Endothelial cell of umbilical vein (primary cell): ENCODE measurements at regions of chr11 and their contacts with region 1.

Region 1: GRCh38 chr11:10808553-10809372 is at the start of gene EIF4G2:
- DNase-seq: peak; percentile 99
- H3K4me3 ChIP-seq: peak within 1 kb of the TSS; percentile 88 to 97 (median 97)
- H3K27ac ChIP-seq: peak within 1 kb of the TSS; percentile 97
- H3K4me1 ChIP-seq: peaks cover 39% of the 10 kb centered on the region
- H3K27me3 ChIP-seq: no peaks in the 10 kb centered on the region
- CTCF ChIP-seq: no peak
- POLR2A ChIP-seq: peak; percentile 100
- total RNA-seq, gene EIF4G2: 1,175 and 1,194 TPM in 2 replicates

Region 2: GRCh38 chr11:10784232-10785145 is 24.3 kb before region 1 on chr11:
- CTCF ChIA-PET with region 1: interaction called, 4 read pairs
- POLR2A ChIA-PET with region 1: interaction called, 15 read pairs
- dilution Hi-C with region 1: no loop called
- intact Hi-C with region 1: no loop called
- DNase-seq: peak; percentile 81
- H3K4me3 ChIP-seq: no peak overlapping the region
- H3K27ac ChIP-seq: peak overlapping the region; percentile 63
- H3K4me1 ChIP-seq: peaks cover 19% of the 10 kb centered on the region
- H3K27me3 ChIP-seq: no peaks in the 10 kb centered on the region
- CTCF ChIP-seq: no peak
- POLR2A ChIP-seq: no peak

Region 3: DNA sequence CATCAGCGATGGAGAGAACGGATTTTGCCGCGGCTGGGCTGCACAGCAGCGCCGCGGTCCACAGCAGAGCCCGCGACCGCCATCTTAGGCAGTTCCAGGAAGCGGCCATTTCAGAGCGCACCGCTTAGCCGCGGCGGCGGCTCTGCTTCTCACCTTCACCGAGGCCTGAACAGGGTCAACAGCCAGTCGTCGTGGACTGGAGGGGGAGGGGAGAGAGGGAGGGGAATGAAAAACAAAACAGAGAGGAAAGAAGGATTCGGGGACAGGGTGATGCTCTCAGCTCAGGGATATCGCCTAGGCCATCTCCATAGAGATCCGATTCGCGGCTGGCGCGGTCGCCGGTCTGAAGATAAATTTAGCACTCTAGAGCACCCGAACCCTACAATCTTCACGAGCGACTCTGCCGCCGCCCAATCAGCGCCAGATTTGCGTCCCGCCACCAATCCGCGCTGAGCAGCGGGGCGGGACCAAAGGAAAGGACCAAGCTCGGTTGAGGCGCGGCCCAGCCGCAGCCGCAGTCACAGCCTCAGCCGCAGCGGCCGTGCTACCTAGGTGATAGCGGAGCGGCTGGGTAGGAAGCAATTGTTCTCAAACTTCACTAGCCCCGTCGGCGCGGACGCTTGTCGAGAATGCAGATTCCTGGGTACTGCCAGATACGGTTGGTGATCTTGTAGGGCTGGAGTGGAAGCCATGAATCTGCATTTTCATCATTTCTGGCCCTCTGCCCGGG is 49.1 kb after region 1 on chr11 and contains the start of gene ZBED5:
- CTCF ChIA-PET with region 1: interaction called, 18 read pairs
- POLR2A ChIA-PET with region 1: interaction called, 90 read pairs
- dilution Hi-C with region 1: no loop called
- intact Hi-C with region 1: loop called (anchors 1 kb)
- DNase-seq: peak; percentile 99
- H3K4me3 ChIP-seq: peak within 1 kb of the TSS; percentile 63 to 100 (median 94)
- H3K27ac ChIP-seq: peak within 1 kb of the TSS; percentile 80
- H3K4me1 ChIP-seq: peaks cover 8% of the 10 kb centered on the region
- H3K27me3 ChIP-seq: no peaks in the 10 kb centered on the region
- CTCF ChIP-seq: peak in 1 of 2 donors; percentile 4
- POLR2A ChIP-seq: peak; percentile 96
- total RNA-seq, gene ZBED5: 35.7 and 41.2 TPM in 2 replicates

Region 4: GRCh38 chr11:10906513-10906912 is 97.8 kb after region 1 on chr11:
- CTCF ChIA-PET with region 1: interaction called, 12 read pairs
- POLR2A ChIA-PET with region 1: interaction called, 13 read pairs
- dilution Hi-C with region 1: no loop called
- intact Hi-C with region 1: loop called (anchors 1 kb)
- DNase-seq: peak; percentile 21
- H3K4me3 ChIP-seq: no peak overlapping the region
- H3K27ac ChIP-seq: no peak overlapping the region
- H3K4me1 ChIP-seq: peaks cover 10% of the 10 kb centered on the region
- H3K27me3 ChIP-seq: no peaks in the 10 kb centered on the region
- CTCF ChIP-seq: no peak
- POLR2A ChIP-seq: no peak

Region 5: GRCh38 chr11:11022125-11022730 is 213.5 kb after region 1 on chr11:
- CTCF ChIA-PET with region 1: interaction called, 6 read pairs
- POLR2A ChIA-PET with region 1: interaction called, 10 read pairs
- dilution Hi-C with region 1: no loop called
- intact Hi-C with region 1: loop called (anchors 2 kb)
- DNase-seq: peak; percentile 29
- H3K4me3 ChIP-seq: no peak overlapping the region
- H3K27ac ChIP-seq: no peak overlapping the region
- H3K4me1 ChIP-seq: peaks cover 19% of the 10 kb centered on the region
- H3K27me3 ChIP-seq: peaks cover 0 to 9% of the 10 kb centered on the region in 2 experiments
- CTCF ChIP-seq: peak; percentile 16 to 26
- POLR2A ChIP-seq: no peak

Region 6: DNA sequence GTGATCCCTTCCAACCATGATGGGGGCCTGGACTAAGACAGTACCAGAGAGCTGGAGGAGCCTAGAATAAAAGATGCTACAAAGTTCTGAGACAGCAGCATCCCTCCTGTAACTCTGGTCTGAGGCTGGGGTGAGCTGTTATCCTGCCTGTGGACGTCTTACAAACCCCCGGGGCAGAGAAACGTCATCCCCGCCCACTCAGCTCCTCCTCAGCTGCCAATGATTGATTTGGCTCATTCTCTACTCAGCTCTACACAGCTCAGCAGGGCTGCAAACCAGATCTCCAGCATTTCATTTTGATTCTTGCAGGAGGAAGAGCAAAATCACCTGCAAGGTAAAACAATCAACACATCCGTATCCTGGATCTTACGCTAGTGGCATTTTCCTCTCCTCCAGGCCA is 488.8 kb after region 1 on chr11:
- CTCF ChIA-PET with region 1: no interaction called
- POLR2A ChIA-PET with region 1: no interaction called
- dilution Hi-C with region 1: no loop called
- intact Hi-C with region 1: no loop called
- DNase-seq: no peak
- H3K4me3 ChIP-seq: no peak overlapping the region
- H3K27ac ChIP-seq: no peak overlapping the region
- H3K4me1 ChIP-seq: no peaks in the 10 kb centered on the region
- H3K27me3 ChIP-seq: no peaks in the 10 kb centered on the region
- CTCF ChIP-seq: no peak
- POLR2A ChIP-seq: no peak